Vagina (tissue), 2 donors: ENCODE measurements at regions of chr10 and their contacts with region 1.

Region 1: DNA sequence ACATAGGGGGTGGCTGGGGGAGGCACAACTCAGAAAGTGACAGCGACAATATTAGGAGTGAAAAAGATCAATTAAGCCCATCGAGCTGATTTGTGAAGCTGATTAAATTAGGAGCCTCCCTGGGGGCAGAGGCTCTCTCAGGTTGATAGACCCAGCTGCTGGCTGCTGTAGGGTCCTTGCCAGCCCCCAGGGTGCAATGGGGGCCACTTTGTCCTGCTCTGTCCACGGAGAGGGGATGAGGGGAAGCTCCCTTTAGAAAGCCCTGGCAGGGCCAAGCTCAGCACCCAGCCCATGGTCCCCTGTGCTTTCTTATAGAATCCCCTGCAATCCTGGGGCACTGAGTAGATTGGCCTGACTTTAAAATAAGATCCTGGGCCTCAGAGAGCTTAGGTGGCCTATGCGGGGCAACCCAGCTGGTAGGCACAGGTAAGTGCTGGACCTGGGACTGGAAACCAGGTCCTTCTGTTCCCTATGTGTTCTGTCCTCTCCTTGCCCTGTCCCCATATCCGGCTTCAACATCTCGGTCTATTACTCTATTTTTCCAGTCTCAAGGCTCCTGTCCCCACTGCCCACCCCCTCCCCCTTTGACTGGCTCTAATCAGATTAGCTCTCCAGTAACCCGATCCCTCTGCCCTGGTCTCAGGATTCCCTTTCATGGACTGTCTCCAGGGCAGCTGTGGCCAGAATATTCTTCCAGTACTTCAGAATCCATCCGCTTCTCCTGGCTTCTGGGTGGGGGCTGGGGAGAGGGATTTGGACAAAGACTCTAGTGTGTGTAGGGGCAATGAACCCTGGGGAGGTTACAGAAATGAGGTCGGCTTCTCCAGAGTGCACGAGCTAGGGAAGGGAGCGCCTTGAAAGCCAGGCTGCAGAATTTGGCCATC is 259.6 kb downstream of the RPS24 start:
- DNase-seq: no peak
- H3K4me3 ChIP-seq: no peak overlapping the region
- H3K27ac ChIP-seq: no peak overlapping the region
- H3K4me1 ChIP-seq: no peaks in the 10 kb centered on the region
- H3K27me3 ChIP-seq: no peaks in the 10 kb centered on the region
- CTCF ChIP-seq: no peak
- POLR2A ChIP-seq: no peak

Region 2: GRCh38 chr10:78059906-78060702 is 233.1 kb before region 1 on chr10:
- intact Hi-C with region 1: loop called (anchors 5 kb)
- DNase-seq: no peak
- H3K4me3 ChIP-seq: no peak overlapping the region
- H3K27ac ChIP-seq: no peak overlapping the region
- H3K4me1 ChIP-seq: no peaks in the 10 kb centered on the region
- H3K27me3 ChIP-seq: no peaks in the 10 kb centered on the region
- CTCF ChIP-seq: no peak
- POLR2A ChIP-seq: no peak

Region 3: GRCh38 chr10:78115135-78115853 is 177.9 kb before region 1 on chr10:
- intact Hi-C with region 1: no loop called
- DNase-seq: no peak
- H3K4me3 ChIP-seq: no peak overlapping the region
- H3K27ac ChIP-seq: no peak overlapping the region
- H3K4me1 ChIP-seq: no peaks in the 10 kb centered on the region
- H3K27me3 ChIP-seq: no peaks in the 10 kb centered on the region
- CTCF ChIP-seq: no peak
- POLR2A ChIP-seq: no peak